Activated T-helper 1 cell treated with anti-CD3 and anti-CD28 coated beads, Interleukin-12 subunit alpha, Interleukin-12 subunit beta, Interleukin-2, Interleukin-4 antibody, amounts not matched to agents 30 ng/mL and 10 ng/mL and 1 ng/mL, durations not matched to agents 14 hours and 24 hours and 36 hours (primary cell): ENCODE measurements at regions of chr11 and their contacts with region 1.

Region 1: DNA sequence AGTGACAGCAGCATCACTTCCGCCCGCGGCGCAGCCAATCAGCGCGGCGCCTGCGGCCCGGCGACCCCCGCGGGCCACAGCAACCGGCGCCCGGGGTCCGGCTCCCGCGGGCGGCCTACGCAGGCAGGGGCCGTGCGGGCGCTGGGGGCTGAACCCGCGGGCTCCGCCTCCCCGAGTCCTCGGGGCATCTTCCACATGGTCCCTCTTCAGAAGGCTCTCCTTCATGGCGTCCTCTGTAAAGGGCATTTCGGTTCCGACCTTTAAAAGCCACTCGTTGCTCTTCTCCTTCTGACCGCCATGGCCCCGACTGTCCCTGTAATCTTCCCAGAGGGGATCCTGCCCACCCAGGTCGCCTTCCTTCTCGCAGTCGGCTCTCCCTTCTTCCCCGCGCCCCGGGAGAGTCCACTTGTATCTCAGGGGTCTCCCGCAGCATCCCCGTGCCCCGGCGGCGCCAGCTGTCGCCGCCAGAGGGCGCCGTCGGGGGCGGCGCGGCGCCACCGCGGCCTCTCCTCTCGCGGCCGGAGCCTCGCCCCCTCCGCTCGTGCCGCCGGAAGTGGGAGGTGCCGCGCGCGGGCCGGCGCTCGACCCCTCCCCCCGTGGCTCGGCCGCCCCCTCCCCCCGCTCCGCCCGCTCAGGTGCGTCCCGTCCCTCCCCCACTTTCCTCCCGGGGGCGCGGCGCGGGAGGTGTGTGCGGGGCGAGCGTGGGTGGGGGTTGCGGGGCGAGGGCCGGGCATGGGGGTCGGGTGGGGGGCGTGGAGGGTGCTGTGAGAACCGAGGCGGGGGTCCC is at the start of gene RNF214:
- DNase-seq: peak; percentile 73
- H3K4me3 Mint-ChIP-seq: peak within 1 kb of the TSS; percentile 99
- H3K27ac Mint-ChIP-seq: peak within 1 kb of the TSS; percentile 100
- H3K4me1 Mint-ChIP-seq: peaks cover 44% of the 10 kb centered on the region
- H3K27me3 Mint-ChIP-seq: no peaks in the 10 kb centered on the region
- total RNA-seq, gene RNF214: 18.5 and 26.3 TPM in 2 replicates

Region 2: DNA sequence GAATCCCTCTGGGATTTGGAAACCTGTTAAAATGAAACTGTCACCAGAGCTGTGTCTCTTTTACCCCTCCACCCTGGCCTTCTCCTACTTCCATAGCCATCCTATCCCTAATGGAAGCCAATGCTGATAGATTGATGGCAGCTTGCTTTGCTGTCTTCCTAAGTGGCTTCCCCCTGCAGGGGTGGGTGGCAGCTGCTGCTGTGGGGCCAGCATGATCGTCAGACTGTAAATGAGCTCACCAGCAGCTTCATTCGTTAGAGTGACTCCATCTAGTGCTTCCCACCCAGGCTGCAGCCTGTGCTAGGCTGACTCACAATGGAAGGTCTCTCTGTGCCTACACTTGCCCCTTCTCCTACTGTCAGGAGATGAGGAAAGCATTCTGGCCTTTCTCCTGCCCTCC is 770.5 kb before region 1 on chr11:
- intact Hi-C with region 1: no loop called
- DNase-seq: no peak
- H3K4me3 Mint-ChIP-seq: no peak overlapping the region
- H3K27ac Mint-ChIP-seq: no peak overlapping the region
- H3K4me1 Mint-ChIP-seq: no peaks in the 10 kb centered on the region
- H3K27me3 Mint-ChIP-seq: peaks cover 6% of the 10 kb centered on the region

Region 3: GRCh38 chr11:116787786-116788486 is 444.3 kb before region 1 on chr11 and contains the start of gene ZPR1:
- intact Hi-C with region 1: loop called (anchors 1 kb)
- DNase-seq: peak; percentile 84
- H3K4me3 Mint-ChIP-seq: peak within 1 kb of the TSS; percentile 90
- H3K27ac Mint-ChIP-seq: peak within 1 kb of the TSS; percentile 88
- H3K4me1 Mint-ChIP-seq: peaks cover 50% of the 10 kb centered on the region
- H3K27me3 Mint-ChIP-seq: no peaks in the 10 kb centered on the region
- total RNA-seq, gene ZPR1: 104 TPM in 2 replicates

Region 4: DNA sequence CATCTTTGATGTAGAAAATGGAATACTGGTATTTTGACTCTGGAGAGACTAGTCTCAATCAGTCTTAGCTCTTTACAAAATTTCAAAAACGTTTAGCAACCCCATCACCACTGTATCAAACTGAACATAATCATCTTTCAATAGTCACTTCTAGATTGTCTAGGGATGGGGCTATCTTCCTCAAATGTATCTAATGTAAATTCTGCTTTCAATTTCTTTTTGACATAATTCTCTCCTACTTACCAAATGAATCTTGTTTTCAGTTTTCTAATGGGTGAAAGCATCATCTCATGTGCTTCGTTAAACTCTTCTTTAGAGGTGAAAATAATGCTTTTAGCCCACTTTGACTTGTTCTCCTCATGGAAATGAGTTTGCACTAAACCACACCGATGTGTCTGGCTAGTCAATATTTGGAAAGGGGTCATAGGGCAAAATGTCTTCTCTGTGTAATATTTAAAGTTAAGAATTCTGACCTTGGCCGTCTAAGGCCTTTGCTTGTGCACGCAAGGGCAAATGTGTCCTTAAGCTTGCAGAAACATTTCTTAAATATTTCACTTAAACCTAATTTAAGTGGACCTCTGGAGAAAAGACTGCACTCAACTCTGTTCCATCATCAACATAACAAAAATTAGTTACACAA is 139.2 kb before region 1 on chr11:
- intact Hi-C with region 1: loop called (anchors 1 kb)
- DNase-seq: no peak
- H3K4me3 Mint-ChIP-seq: peak overlapping the region; percentile 53
- H3K27ac Mint-ChIP-seq: peak overlapping the region; percentile 81
- H3K4me1 Mint-ChIP-seq: peaks cover 77% of the 10 kb centered on the region
- H3K27me3 Mint-ChIP-seq: no peaks in the 10 kb centered on the region

Region 5: DNA sequence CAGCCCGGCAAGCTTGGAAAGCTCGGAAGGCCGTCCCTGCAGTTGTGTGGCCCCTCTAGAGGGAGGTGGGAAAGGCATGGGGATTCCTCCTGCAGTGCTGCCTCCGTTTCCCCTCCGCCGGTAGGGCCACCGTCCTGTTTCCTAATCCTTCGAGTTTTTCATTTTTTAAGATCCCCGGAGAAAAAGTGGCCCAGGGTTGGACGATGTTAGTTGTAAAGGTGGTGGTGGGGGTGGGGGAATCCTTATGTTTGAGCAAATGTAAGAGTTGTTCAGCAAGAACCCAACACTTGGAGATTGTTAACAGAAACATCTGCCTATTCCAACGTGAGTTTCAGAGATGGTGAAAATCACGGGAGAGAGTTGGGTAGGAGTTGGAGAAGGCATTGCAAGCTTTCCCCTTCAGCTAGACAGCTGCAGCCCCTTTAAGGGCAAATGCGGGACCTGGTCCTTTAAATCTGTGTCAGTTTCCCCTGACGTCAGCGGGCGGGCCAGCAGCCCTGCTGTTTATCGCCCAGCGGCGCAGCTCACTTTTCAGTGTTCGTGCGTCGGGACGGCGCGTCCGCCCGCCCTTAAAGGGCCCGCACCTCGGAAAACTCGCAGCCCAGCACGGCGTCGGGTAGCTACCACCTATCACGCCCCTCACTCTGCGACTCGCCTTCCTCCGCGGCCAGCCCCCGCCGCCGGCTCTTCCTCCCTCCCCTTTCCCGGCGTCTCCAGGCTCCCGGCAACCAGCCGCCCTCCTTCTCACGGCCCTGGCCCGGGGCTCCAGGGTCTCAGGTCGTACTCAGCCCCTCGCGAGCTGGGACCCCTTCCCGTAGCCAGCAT is 53.9 kb before region 1 on chr11 and contains the start of gene SIDT2:
- intact Hi-C with region 1: loop called (anchors 1 kb)
- DNase-seq: peak; percentile 89
- H3K4me3 Mint-ChIP-seq: peak within 1 kb of the TSS; percentile 95
- H3K27ac Mint-ChIP-seq: peak within 1 kb of the TSS; percentile 86
- H3K4me1 Mint-ChIP-seq: peaks cover 33% of the 10 kb centered on the region
- H3K27me3 Mint-ChIP-seq: no peaks in the 10 kb centered on the region
- total RNA-seq, gene SIDT2: 24.3 and 32.2 TPM in 2 replicates

Region 6: GRCh38 chr11:117817368-117818040 is 585.2 kb after region 1 on chr11:
- intact Hi-C with region 1: loop called (anchors 5 kb)
- DNase-seq: peak; percentile 83
- H3K4me3 Mint-ChIP-seq: peak overlapping the region; percentile 70
- H3K27ac Mint-ChIP-seq: peak overlapping the region; percentile 98
- H3K4me1 Mint-ChIP-seq: peaks cover 79% of the 10 kb centered on the region
- H3K27me3 Mint-ChIP-seq: no peaks in the 10 kb centered on the region